Activated CD4-positive, alpha-beta T cell treated with anti-CD3 and anti-CD28 coated beads for 36 hours (primary cell): ENCODE measurements at regions of chr14 and their contacts with region 1.

Region 1: DNA sequence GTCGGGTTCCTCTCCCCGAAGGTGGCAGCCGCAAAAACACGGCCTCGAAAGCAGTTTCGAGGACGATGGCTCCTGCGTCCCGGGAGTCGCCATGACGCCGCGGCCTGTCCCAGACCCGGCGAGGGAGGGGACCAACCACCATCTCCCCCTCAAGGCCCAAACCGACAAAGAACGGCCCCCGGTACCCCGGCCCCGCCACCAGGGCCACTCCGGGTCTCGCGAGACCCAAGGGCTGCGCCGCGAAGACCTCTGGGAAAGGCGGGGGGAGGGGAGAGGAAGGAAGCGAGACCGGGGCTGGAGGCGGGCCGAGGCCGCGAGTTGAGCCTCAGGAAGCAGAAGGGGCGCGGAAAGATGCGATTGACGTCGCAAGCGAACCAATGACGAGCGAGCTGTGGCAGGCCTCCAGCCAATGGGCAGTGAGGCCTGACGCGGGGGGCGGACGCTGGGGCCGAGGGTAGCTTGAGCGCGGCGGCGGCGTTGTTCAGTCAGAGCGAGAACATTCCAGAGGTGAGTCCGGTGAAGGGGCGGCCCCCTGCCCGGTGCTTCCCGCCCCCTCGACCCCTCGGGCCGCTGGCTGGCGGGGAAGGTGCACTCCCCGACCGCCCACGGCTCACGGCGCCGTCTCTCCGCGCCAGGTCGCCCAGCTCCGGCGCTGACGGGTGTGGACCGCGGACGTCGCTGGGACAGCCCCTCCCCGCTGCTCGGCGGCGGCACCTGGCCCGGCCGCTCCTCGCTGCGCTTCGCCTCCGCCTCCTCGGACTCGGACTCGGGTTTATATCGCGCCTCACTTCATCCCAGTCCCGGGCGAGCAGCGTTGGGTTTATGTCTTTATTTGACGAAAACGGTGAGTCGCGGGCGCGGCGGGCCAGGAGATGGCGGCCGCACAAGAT is at the start of gene EIF5:
- DNase-seq: peak; percentile 99
- ATAC-seq: peak; percentile 91
- H3K4me3 Mint-ChIP-seq: peak within 1 kb of the TSS; percentile 79
- H3K27ac Mint-ChIP-seq: peak within 1 kb of the TSS; percentile 92
- H3K4me1 Mint-ChIP-seq: peaks cover 53% of the 10 kb centered on the region
- H3K27me3 Mint-ChIP-seq: no peaks in the 10 kb centered on the region
- total RNA-seq, gene EIF5: 222 to 234 TPM

Region 2: DNA sequence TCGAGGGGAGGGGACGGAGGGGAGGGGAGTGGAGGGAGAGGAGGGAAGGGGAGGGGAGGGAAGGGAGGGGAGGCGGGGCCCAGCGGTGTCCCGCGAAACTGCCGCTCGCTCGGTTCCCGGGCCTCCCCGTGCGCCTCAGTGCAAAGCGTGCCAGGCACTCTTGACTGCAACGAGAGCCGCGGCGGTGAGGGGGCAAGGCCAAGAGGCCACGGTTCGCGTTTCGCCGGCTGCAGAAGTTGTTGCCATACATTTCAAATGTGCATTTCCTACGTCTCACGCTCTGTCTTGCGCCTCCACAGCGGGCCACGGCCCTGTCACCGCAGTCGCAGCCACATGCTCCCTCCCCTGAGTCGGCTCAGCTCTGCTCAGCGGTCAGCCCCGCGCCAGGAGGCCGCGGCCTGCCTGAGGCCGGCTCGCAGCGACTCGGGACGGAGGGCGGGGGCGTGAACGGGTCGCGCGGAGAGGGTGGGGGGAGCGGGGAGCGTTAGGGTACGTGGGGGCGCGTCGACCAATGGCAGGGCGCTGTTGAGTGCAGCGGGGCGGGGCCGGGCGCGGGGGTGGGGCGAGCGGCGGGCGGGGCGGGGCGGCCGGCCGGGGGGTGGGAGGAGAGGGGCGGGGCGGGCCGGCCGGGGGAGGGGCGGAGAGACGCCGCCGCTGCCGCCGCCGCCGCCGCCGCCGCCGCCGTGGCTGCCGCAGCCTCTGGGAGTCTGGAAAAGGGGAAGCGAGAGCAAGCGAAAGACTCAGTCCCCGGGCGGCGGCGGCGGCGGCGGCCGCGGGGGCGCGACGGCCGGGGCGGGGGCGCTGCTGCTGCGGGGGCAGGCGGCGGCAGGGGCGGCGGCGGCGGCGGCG is 1572.7 kb before region 1 on chr14 and contains the start of gene PPP2R5C:
- CTCF ChIA-PET with region 1: no interaction called
- POLR2A ChIA-PET with region 1: no interaction called
- intact Hi-C with region 1: loop called in 1 of 2 experiments (anchors 10 kb)
- DNase-seq: peak; percentile 94
- ATAC-seq: peak; percentile 65
- H3K4me3 Mint-ChIP-seq: peak within 1 kb of the TSS; percentile 85
- H3K27ac Mint-ChIP-seq: peak within 1 kb of the TSS; percentile 78
- H3K4me1 Mint-ChIP-seq: peaks cover 43% of the 10 kb centered on the region
- H3K27me3 Mint-ChIP-seq: no peaks in the 10 kb centered on the region
- total RNA-seq, gene PPP2R5C: 232 to 281 TPM

Region 3: GRCh38 chr14:102362545-102363181 is 971.3 kb before region 1 on chr14 and contains the starts of genes CINP and TECPR2:
- CTCF ChIA-PET with region 1: no interaction called
- POLR2A ChIA-PET with region 1: no interaction called
- intact Hi-C with region 1: loop called in 1 of 2 experiments (anchors 5 kb)
- DNase-seq: peak; percentile 99
- ATAC-seq: peak; percentile 78
- H3K4me3 Mint-ChIP-seq: no peak within 1 kb of the TSS
- H3K27ac Mint-ChIP-seq: peak within 1 kb of the TSS; percentile 96
- H3K4me1 Mint-ChIP-seq: peaks cover 36% of the 10 kb centered on the region
- H3K27me3 Mint-ChIP-seq: no peaks in the 10 kb centered on the region
- total RNA-seq, gene CINP: 47.0 to 51.4 TPM
- total RNA-seq, gene TECPR2: 5.6 to 6.9 TPM

Region 4: GRCh38 chr14:102805371-102806246 is 528.4 kb before region 1 on chr14:
- CTCF ChIA-PET with region 1: no interaction called
- POLR2A ChIA-PET with region 1: no interaction called
- intact Hi-C with region 1: loop called in 1 of 2 experiments (anchors 5 kb)
- DNase-seq: peak; percentile 76
- ATAC-seq: peak; percentile 57
- H3K4me3 Mint-ChIP-seq: peak overlapping the region; percentile 65
- H3K27ac Mint-ChIP-seq: peak overlapping the region; percentile 96
- H3K4me1 Mint-ChIP-seq: peaks cover 78% of the 10 kb centered on the region
- H3K27me3 Mint-ChIP-seq: no peaks in the 10 kb centered on the region

Region 5: DNA sequence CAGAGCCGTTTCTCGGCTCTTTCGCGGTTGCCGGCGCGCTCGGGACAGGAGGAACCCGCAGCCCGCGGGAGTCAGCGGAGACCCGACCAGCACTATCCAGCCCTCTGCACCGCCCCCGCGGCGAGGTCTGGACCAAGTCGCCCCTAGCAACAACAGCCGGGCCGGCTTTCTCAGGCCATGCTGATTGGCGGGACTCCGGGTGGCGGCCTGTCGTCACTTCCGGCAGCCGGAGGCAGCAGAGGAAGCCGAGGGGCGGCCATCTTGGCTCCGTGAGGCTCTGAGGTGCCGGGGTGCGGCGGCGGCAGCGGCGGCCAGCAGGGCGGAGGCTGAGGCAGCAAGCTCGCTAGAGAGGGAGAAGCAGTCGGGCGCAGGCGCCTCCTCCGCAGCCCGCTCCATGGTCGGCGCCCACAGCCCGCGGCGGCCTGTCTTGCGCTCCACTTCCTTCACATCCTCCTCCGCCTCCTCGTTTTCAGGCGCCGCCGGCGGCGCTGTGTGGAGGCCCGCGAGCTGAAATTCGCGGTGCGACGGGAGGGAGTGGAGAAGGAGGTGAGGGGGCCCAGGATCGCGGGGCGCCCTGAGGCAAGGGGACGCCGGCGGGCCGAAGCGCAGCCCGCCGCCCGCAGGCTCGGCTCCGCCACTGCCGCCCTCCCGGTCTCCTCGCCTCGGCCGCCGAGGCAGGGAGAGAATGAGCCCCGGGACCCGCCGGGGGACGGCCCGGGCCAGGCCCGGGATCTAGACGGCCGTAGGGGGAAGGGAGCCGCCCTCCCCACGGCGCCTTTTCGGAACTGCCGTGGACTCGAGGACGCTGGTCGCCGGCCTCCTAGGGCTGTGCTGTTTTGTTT is 51.4 kb after region 1 on chr14 and contains the start of gene MARK3:
- CTCF ChIA-PET with region 1: interaction called, 3 read pairs
- POLR2A ChIA-PET with region 1: interaction called, 4 read pairs
- intact Hi-C with region 1: loop called (anchors 1 kb)
- DNase-seq: peak; percentile 98
- ATAC-seq: peak; percentile 93
- H3K4me3 Mint-ChIP-seq: peak within 1 kb of the TSS; percentile 99
- H3K27ac Mint-ChIP-seq: peak within 1 kb of the TSS; percentile 98
- H3K4me1 Mint-ChIP-seq: peaks cover 33% of the 10 kb centered on the region
- H3K27me3 Mint-ChIP-seq: no peaks in the 10 kb centered on the region
- total RNA-seq, gene MARK3: 57.3 to 64.9 TPM

Region 6: DNA sequence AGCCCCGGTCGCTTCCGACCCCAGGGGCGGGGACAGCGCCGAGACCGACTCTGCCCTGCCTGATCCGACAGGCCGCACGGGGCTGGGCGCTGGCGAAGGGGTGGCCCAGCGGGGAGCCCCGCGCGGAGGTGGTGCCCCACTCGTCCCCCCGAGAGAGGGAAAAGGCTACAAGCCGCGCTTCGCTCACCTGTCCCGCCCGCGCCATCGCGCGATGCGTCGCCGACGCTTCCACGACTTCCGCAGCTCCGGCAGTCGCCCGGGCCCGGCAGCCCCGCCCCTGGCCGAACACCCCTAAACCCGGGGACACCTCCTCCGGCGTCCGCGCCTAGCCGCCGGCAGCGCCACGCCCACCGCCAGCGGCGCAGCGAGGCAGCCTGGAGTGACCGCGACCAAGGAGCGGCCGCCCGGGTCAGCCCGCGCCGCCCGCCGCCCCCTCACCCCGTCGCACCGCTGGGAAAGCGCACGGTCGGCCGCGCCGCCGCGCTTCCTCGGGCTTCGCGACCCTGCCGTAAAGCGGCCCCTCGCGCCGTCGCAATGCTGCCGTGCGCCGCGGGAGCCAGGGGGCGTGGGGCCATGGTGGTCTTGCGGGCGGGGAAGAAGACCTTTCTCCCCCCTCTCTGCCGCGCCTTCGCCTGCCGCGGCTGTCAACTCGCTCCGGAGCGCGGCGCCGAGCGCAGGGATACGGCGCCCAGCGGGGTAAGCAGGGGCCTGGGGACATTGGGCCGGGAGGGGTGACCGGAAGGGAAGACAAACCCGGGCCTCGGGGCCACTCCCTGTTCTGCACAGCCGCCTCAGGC is 228.6 kb after region 1 on chr14 and contains the starts of genes BAG5 and COA8:
- CTCF ChIA-PET with region 1: no interaction called
- POLR2A ChIA-PET with region 1: interaction called, 7 read pairs
- intact Hi-C with region 1: loop called in 1 of 2 experiments (anchors 1 kb)
- DNase-seq: peak; percentile 93
- ATAC-seq: peak; percentile 78
- H3K4me3 Mint-ChIP-seq: peak within 1 kb of the TSS; percentile 94
- H3K27ac Mint-ChIP-seq: peak within 1 kb of the TSS; percentile 91
- H3K4me1 Mint-ChIP-seq: peaks cover 61% of the 10 kb centered on the region
- H3K27me3 Mint-ChIP-seq: no peaks in the 10 kb centered on the region
- total RNA-seq, gene BAG5: 24.2 to 25.1 TPM
- total RNA-seq, gene COA8: 39.6 to 41.7 TPM

Region 7: GRCh38 chr14:103920981-103921854 is 587.2 kb after region 1 on chr14:
- CTCF ChIA-PET with region 1: no interaction called
- POLR2A ChIA-PET with region 1: no interaction called
- intact Hi-C with region 1: loop called in 1 of 2 experiments (anchors 1 kb)
- DNase-seq: peak; percentile 97
- ATAC-seq: peak; percentile 99
- H3K4me3 Mint-ChIP-seq: peak overlapping the region; percentile 85
- H3K27ac Mint-ChIP-seq: peak overlapping the region; percentile 80
- H3K4me1 Mint-ChIP-seq: peaks cover 12% of the 10 kb centered on the region
- H3K27me3 Mint-ChIP-seq: peaks cover 6% of the 10 kb centered on the region